HCT116 (cell line): ENCODE measurements at regions of chr14 and their contacts with region 1.

Region 1: DNA sequence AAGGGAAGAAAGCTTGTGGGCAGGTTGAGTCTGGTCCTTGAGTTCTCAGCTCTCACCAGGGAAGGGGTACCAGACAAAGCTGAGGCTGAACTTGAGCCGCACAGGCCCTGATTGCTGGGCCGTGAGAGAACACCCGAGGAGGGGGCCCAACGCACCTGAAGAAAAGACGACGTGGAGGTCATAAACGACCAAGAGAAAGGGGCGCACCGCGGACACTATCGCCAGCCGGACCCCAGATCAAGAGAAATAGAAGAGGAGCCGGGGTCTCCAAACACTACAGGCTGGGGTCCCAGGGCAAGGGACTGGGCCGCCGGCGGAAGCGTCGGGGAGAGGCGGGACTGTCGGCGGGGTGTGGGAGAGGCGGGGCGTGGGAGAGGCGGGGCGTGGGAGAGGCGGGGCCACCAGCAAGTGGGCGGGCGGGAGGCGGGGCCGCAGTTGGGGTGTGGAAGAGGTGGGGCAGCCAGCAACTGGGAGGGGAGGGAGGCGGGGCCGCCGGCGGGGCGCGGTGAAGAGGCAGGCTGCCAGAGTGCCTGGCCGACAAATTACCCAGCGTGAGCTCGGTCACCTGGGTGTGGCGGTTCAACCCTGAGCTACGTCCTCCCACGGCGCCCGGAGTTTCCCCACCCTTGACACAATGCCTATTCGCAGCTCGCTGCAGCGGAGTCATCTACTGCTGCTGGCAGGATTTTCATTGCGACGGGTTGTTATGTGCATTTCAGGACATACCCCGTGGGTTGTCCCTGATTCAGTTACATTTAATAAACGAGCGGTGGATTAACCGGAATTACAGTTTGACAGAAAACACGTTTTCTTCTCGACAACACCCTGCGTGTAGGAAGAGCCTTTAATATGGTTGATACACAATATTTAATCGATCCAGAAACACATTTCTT is 15.5 kb upstream of the NEMF start:
- DNase-seq: peak; percentile 94
- ATAC-seq: peak; percentile 91
- H3K4me3 ChIP-seq: peak overlapping the region; percentile 66 to 78
- H3K27ac ChIP-seq: peak overlapping the region; percentile 75
- H3K4me1 ChIP-seq: peaks cover 18 to 56% of the 10 kb centered on the region in 2 experiments
- H3K27me3 ChIP-seq: no peaks in the 10 kb centered on the region
- CTCF ChIP-seq: no peak
- POLR2A ChIP-seq: peak; percentile 82
- RAD21 ChIP-seq: peak; percentile 31; the same call in 1 of the 2 replicates

Region 2: DNA sequence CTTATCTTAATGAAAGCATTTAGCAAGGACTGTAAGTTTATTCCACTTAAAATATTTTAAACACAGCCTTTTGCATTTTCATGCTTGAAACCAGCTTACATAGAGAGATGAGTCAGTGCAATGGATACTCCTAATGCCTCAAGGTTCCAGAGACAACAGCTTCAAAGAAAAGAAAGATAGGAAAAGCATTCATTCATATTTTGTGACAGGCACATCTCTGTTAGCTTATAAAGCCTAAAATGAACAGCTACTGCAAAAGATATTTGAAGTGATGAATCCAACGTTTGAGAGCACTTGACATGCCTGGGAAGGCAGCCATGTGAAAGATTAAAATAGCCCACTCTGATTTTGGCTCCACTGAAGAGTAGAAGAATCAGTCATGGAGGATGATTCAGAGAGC is 1096.4 kb before region 1 on chr14:
- CTCF ChIA-PET with region 1: no interaction called
- POLR2A ChIA-PET with region 1: no interaction called
- RAD21 ChIA-PET with region 1: no interaction called
- intact Hi-C with region 1: no loop called
- DNase-seq: no peak
- ATAC-seq: no peak
- H3K4me3 ChIP-seq: no peak overlapping the region
- H3K27ac ChIP-seq: no peak overlapping the region
- H3K4me1 ChIP-seq: no peaks in the 10 kb centered on the region
- H3K27me3 ChIP-seq: no peaks in the 10 kb centered on the region
- CTCF ChIP-seq: no peak
- POLR2A ChIP-seq: no peak
- RAD21 ChIP-seq: no peak

Region 3: GRCh38 chr14:49852301-49853157 is 15.5 kb before region 1 on chr14 and contains the start of gene NEMF:
- CTCF ChIA-PET with region 1: interaction called, 76 read pairs
- POLR2A ChIA-PET with region 1: interaction called, 6 read pairs
- RAD21 ChIA-PET with region 1: no interaction called
- intact Hi-C with region 1: no loop called
- DNase-seq: peak; percentile 90
- ATAC-seq: peak; percentile 75
- H3K4me3 ChIP-seq: peak within 1 kb of the TSS; percentile 82 to 89
- H3K27ac ChIP-seq: peak within 1 kb of the TSS; percentile 66
- H3K4me1 ChIP-seq: peaks cover 7 to 22% of the 10 kb centered on the region in 2 experiments
- H3K27me3 ChIP-seq: no peaks in the 10 kb centered on the region
- CTCF ChIP-seq: peak; percentile 76 to 95 (median 91)
- POLR2A ChIP-seq: no peak
- RAD21 ChIP-seq: peak; percentile 42; the same call in 1 of the 2 replicates
- total RNA-seq, gene NEMF: 57.7 TPM

Region 4: GRCh38 chr14:49879683-49880204 is 11.7 kb after region 1 on chr14:
- CTCF ChIA-PET with region 1: interaction called, 30 read pairs
- POLR2A ChIA-PET with region 1: interaction called, 20 read pairs
- RAD21 ChIA-PET with region 1: interaction called, 4 to 6 read pairs
- intact Hi-C with region 1: no loop called
- DNase-seq: peak; percentile 95
- ATAC-seq: peak; percentile 89
- H3K4me3 ChIP-seq: peak overlapping the region in 1 of 2 experiments; percentile 33; a peak in 2 of 4 replicates
- H3K27ac ChIP-seq: peak overlapping the region; percentile 63
- H3K4me1 ChIP-seq: peaks cover 27 to 63% of the 10 kb centered on the region in 2 experiments
- H3K27me3 ChIP-seq: no peaks in the 10 kb centered on the region
- CTCF ChIP-seq: peak; percentile 53 to 88 (median 79); a peak in 5 of 6 replicates
- POLR2A ChIP-seq: no peak
- RAD21 ChIP-seq: peak; percentile 79

Region 5: DNA sequence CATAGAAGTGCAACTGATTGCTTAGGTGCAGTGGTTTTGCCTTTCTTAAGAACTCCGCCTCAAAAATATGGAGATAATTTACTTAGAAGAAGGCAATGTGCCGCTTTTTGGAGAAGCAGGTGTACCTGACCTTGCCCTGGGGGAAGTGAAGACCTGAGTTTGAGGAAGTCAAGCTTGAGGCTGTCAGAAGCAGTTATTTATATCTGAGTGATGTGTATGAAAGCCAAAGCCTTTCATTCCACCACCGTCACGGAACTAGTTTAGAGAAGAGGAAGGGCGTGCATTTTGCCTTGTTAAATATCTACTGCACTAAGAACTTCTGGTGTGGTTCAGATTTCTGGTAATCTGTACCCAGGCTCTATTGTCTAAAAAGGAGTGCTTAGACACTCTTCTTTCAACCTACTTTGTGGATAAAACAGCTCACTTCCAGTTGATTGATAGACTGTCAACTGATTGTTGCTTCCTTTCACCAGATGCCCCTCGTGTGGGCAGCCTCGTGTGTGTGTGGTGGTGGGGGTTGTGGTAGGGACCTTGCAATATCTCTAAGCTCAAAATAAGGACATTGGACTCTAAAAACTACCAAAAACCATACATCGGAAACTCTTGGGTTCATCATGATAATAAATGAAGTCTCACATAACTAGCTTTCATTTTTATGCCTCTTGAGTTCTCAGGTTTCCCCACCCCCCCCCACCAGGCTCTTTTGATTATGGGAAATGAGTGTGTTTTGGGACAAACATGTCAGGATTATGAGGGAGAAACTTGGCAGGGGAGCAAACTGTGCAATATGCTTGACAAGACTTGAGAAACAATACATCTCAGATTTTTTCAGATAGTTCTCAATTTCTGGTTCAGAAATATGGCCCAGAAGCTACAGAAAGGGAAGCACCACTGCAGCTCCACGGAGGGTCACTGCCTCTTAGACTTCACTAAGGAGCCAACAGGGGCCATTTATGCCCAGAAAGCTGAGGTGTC is 103.4 kb after region 1 on chr14:
- CTCF ChIA-PET with region 1: interaction called, 7 read pairs
- POLR2A ChIA-PET with region 1: interaction called, 10 read pairs
- RAD21 ChIA-PET with region 1: interaction called in 1 of 2 experiments, 11 read pairs
- intact Hi-C with region 1: no loop called
- DNase-seq: no peak
- ATAC-seq: no peak
- H3K4me3 ChIP-seq: no peak overlapping the region
- H3K27ac ChIP-seq: peak overlapping the region; percentile 96
- H3K4me1 ChIP-seq: peaks cover 55 to 75% of the 10 kb centered on the region in 2 experiments
- H3K27me3 ChIP-seq: no peaks in the 10 kb centered on the region
- CTCF ChIP-seq: no peak
- POLR2A ChIP-seq: no peak
- RAD21 ChIP-seq: no peak

Region 6: DNA sequence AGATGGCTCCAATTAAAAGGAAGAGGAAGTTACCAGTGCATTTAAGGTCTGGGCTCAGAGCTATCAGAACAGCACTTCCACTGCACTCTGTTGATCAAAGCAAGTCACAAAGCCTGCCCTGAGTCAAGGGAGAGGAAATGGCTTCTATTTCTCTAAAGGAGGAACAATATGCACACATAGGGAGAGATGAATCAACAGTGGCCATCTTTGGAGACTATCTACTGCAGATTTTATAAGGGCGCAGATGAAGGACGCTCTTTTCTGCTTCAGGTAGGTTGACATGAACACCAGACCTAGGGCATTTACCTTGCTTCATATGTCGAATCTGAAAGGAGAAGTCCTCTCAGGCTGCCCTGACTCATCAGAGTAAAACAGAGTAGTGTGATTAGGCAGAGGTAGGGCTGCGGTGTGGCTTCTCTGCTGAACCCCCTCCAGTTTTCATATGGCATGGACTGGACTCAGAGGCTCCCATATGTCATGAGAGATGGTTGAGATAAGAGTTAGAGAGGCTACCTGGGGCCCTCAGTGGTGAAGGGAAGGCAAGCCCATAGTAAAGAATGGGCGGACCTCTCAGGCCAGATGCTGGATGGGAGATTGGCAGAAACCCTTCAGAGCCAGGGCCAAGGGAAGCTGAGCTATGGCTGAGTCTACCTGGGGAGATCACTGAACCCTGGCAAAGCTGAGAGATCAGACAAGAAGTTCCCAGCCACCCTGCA is 109.2 kb after region 1 on chr14:
- CTCF ChIA-PET with region 1: interaction called, 7 read pairs
- POLR2A ChIA-PET with region 1: interaction called, 10 read pairs
- RAD21 ChIA-PET with region 1: interaction called in 1 of 2 experiments, 3 read pairs
- intact Hi-C with region 1: no loop called
- DNase-seq: no peak
- ATAC-seq: no peak
- H3K4me3 ChIP-seq: no peak overlapping the region
- H3K27ac ChIP-seq: peak overlapping the region; percentile 96; the same call in 1 of the 2 replicates
- H3K4me1 ChIP-seq: peaks cover 44 to 56% of the 10 kb centered on the region in 2 experiments
- H3K27me3 ChIP-seq: no peaks in the 10 kb centered on the region
- CTCF ChIP-seq: no peak
- POLR2A ChIP-seq: no peak
- RAD21 ChIP-seq: no peak

Region 7: DNA sequence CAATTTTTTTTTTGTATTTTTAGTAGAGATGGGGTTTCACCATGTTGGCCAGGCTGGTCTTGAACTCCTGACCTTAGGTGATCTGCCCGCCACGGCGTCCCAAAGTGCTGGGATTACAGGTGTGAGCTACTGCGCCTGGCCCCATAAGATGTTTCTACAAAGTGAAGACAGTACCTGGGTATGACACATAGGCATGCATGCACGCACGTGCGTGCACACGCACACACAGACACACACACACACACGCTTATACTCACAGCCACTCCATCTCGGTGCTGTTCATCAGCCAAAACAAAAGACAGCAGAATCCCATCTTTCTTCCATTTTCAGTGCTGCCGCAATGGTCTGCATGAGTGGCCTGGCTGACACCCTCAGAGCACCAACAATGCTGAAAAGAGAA is 184.4 kb after region 1 on chr14:
- CTCF ChIA-PET with region 1: no interaction called
- POLR2A ChIA-PET with region 1: no interaction called
- RAD21 ChIA-PET with region 1: no interaction called
- intact Hi-C with region 1: no loop called
- DNase-seq: no peak
- ATAC-seq: no peak
- H3K4me3 ChIP-seq: no peak overlapping the region
- H3K27ac ChIP-seq: no peak overlapping the region
- H3K4me1 ChIP-seq: peaks cover 0 to 11% of the 10 kb centered on the region in 2 experiments; a peak in 1 of 4 replicates
- H3K27me3 ChIP-seq: no peaks in the 10 kb centered on the region
- CTCF ChIP-seq: no peak
- POLR2A ChIP-seq: no peak
- RAD21 ChIP-seq: no peak

Region 8: GRCh38 chr14:50109342-50109741 is 241.3 kb after region 1 on chr14:
- CTCF ChIA-PET with region 1: interaction called, 32 read pairs
- POLR2A ChIA-PET with region 1: interaction called, 3 read pairs
- RAD21 ChIA-PET with region 1: interaction called in 1 of 2 experiments, 3 read pairs
- intact Hi-C with region 1: loop called (anchors 1 kb)
- DNase-seq: peak; percentile 4
- ATAC-seq: peak; percentile 46; the same call in 1 of the 2 replicates
- H3K4me3 ChIP-seq: no peak overlapping the region
- H3K27ac ChIP-seq: no peak overlapping the region
- H3K4me1 ChIP-seq: peaks cover 0 to 4% of the 10 kb centered on the region in 2 experiments; a peak in 1 of 4 replicates
- H3K27me3 ChIP-seq: no peaks in the 10 kb centered on the region
- CTCF ChIP-seq: peak in 2 of 3 experiments; percentile 43 to 50; a peak in 3 of 6 replicates
- POLR2A ChIP-seq: no peak
- RAD21 ChIP-seq: peak; percentile 25; the same call in 1 of the 2 replicates

Region 9: DNA sequence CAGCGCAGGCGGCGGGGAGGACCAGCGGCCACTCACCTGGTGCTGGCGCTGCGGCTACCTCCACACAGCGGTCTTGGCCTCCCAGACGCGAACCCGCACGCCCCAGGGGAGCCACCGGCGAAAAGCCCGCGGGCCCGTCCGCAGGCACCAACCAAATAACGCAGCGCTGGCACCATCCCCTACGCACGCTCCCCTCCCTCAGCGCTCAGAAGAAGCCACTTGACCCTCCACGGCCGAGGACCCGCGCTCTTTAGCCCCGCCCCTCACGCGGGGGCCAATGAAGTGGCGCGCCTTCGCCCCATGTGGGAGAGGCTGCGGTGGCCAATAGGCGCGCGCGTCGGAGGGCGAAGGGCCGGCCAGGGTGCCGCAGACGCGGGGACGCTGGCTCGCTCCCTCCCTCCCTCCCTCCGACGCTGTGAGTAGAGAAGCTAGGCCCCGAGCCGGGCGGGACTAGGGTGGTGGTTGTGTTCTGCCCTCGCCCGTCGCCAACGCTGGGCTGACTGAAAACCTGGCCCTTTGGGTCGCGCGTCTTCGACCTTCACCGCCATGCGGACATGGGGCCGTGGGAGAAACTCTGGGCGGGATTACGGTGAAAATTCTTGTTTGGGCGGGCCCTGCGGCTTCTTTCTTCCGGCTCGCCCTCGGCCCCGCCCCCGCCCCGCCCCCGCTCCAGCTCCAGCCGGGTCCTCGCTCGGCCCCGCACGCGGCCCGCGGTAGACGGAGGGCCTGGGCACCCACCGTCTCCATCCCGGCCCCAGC is 444.1 kb after region 1 on chr14 and contains the starts of genes DMAC2L and L2HGDH:
- CTCF ChIA-PET with region 1: interaction called, 5 read pairs
- POLR2A ChIA-PET with region 1: no interaction called
- RAD21 ChIA-PET with region 1: no interaction called
- intact Hi-C with region 1: loop called (anchors 10 kb)
- DNase-seq: peak; percentile 88
- ATAC-seq: peak; percentile 93
- H3K4me3 ChIP-seq: peak within 1 kb of the TSS; percentile 76 to 87
- H3K27ac ChIP-seq: peak within 1 kb of the TSS; percentile 84
- H3K4me1 ChIP-seq: peaks cover 0 to 27% of the 10 kb centered on the region in 2 experiments; a peak in 3 of 4 replicates
- H3K27me3 ChIP-seq: no peaks in the 10 kb centered on the region
- CTCF ChIP-seq: no peak
- POLR2A ChIP-seq: peak; percentile 54
- RAD21 ChIP-seq: 0 out of 2 replicates have a peak, but pooled peaks have one; percentile 19
- total RNA-seq, gene DMAC2L: 8.9 TPM
- total RNA-seq, gene L2HGDH: 16.9 TPM